Activated naive CD4-positive, alpha-beta T cell treated with anti-CD3 and anti-CD28 coated beads for 36 hours (primary cell): ENCODE measurements at regions of chr2 and their contacts with region 1.

Region 1: GRCh38 chr2:37635504-37636380 is 35.7 kb downstream of the CDC42EP3 start:
- DNase-seq: peak; percentile 85
- H3K4me3 Mint-ChIP-seq: no peak overlapping the region
- H3K27ac Mint-ChIP-seq: peak overlapping the region; percentile 90
- H3K4me1 Mint-ChIP-seq: peaks cover 49% of the 10 kb centered on the region
- H3K27me3 Mint-ChIP-seq: no peaks in the 10 kb centered on the region

Region 2: DNA sequence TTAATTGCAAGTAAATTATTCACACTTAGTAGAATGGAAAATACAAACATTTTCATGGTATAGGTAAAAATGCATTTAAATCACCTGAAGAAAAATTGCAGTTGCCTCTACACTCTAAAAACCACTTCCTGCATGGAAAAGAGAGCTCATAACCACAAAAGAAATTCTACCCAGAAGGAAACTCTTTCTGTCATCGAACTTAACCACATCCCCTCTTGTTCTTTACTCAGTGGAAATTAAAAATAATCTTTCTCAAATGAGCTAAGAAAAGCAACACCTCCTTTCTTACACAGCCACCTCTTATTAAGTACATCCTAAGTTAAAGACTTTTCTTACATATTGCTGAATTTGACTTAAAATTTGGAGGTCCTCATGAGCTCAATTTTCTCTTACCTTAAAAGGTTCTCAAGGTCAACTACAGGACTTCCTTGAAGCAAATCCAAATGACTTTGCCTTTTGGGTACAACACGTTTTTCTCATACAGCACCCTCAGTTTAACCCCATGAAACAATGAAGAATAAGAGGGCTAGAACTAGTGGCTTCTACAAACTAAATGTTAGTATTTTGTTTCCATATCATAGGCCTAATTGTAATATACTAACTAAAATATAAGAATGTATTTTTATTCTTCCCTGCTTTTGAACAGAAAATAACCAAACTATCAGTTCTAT is 1389.3 kb before region 1 on chr2:
- CTCF ChIA-PET with region 1: no interaction called
- intact Hi-C with region 1: loop called (anchors 10 kb)
- DNase-seq: no peak
- H3K4me3 Mint-ChIP-seq: peak overlapping the region; percentile 24
- H3K27ac Mint-ChIP-seq: peak overlapping the region; percentile 72
- H3K4me1 Mint-ChIP-seq: peaks cover 59% of the 10 kb centered on the region
- H3K27me3 Mint-ChIP-seq: no peaks in the 10 kb centered on the region

Region 3: GRCh38 chr2:37324786-37325624 is 310.7 kb before region 1 on chr2 and contains the start of gene PRKD3:
- CTCF ChIA-PET with region 1: no interaction called
- intact Hi-C with region 1: loop called (anchors 5 kb)
- DNase-seq: peak; percentile 51
- H3K4me3 Mint-ChIP-seq: peak within 1 kb of the TSS; percentile 93
- H3K27ac Mint-ChIP-seq: peak within 1 kb of the TSS; percentile 84
- H3K4me1 Mint-ChIP-seq: peaks cover 29% of the 10 kb centered on the region
- H3K27me3 Mint-ChIP-seq: peaks cover 17% of the 10 kb centered on the region
- total RNA-seq, gene PRKD3: 13.0 TPM

Region 4: DNA sequence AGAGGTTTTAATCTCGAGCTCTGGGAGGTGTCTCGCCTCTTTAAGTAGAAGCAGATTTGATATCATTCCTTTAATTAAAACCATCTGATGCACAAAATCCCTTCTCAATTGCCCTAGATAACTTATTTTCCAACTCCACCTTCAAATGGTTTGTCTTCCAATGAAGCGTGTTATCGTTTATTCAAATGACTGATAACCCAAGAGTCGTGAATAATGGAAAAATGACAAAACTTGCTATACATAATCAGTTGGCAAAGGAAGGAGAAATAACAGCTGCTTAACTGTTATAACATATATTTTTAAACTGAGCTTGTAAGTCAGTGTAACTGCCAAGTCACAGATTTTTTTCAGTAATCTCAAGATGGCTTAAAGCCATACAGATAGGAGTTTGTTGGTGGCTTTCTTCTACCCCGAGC is 146.7 kb before region 1 on chr2:
- CTCF ChIA-PET with region 1: no interaction called
- intact Hi-C with region 1: no loop called
- DNase-seq: no peak
- H3K4me3 Mint-ChIP-seq: no peak overlapping the region
- H3K27ac Mint-ChIP-seq: no peak overlapping the region
- H3K4me1 Mint-ChIP-seq: no peaks in the 10 kb centered on the region
- H3K27me3 Mint-ChIP-seq: no peaks in the 10 kb centered on the region

Region 5: DNA sequence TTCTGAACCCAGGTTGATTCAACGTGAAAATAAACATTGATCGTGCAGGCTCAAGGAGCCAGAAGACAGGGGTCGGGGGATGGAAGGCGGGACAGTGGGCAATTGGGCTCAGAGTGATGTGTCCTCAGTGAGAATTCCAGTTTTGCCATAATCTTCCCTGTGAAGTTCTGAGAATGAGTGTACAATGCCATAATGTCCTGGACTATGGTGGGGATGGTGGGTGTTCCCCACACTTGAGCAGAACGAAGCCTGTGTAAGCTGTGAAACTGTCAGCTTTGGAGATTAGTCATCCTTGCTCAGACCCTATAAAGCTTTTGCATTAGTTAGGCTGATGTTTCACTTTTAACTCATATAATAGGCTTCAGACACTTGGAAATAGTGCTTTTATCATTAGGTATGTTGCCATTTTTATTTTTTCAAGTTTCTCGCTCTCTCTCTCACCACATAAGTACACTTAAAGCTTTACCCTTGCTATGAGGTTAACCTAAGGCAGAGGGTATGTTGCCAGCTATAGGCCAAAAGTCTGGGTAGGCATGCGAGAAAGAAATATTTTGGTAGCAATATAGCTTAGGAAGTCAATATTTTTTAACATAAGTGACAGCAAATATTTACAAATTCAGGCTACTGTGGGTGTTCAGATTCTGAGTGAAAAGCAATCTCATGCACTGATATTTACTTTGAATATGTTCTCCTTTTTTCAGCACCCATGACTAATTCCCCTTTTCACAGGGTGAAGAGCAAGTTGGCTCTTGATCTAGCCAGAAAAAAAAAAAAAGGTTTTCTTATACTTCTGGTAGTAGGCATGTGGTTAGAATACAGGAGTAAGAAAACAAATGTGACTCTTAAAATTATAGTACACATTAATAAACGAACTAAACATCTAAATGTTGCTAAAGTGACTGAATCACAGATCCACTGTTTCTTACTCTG is 11.5 kb before region 1 on chr2:
- CTCF ChIA-PET with region 1: no interaction called
- intact Hi-C with region 1: loop called (anchors 1 kb)
- DNase-seq: peak; percentile 43
- H3K4me3 Mint-ChIP-seq: no peak overlapping the region
- H3K27ac Mint-ChIP-seq: peak overlapping the region; percentile 38
- H3K4me1 Mint-ChIP-seq: peaks cover 67% of the 10 kb centered on the region
- H3K27me3 Mint-ChIP-seq: no peaks in the 10 kb centered on the region

Region 6: GRCh38 chr2:37654932-37655331 is 19.2 kb after region 1 on chr2:
- CTCF ChIA-PET with region 1: no interaction called
- intact Hi-C with region 1: loop called (anchors 1 kb)
- DNase-seq: no peak
- H3K4me3 Mint-ChIP-seq: peak overlapping the region; percentile 33
- H3K27ac Mint-ChIP-seq: peak overlapping the region; percentile 71
- H3K4me1 Mint-ChIP-seq: peaks cover 80% of the 10 kb centered on the region
- H3K27me3 Mint-ChIP-seq: no peaks in the 10 kb centered on the region

Region 7: DNA sequence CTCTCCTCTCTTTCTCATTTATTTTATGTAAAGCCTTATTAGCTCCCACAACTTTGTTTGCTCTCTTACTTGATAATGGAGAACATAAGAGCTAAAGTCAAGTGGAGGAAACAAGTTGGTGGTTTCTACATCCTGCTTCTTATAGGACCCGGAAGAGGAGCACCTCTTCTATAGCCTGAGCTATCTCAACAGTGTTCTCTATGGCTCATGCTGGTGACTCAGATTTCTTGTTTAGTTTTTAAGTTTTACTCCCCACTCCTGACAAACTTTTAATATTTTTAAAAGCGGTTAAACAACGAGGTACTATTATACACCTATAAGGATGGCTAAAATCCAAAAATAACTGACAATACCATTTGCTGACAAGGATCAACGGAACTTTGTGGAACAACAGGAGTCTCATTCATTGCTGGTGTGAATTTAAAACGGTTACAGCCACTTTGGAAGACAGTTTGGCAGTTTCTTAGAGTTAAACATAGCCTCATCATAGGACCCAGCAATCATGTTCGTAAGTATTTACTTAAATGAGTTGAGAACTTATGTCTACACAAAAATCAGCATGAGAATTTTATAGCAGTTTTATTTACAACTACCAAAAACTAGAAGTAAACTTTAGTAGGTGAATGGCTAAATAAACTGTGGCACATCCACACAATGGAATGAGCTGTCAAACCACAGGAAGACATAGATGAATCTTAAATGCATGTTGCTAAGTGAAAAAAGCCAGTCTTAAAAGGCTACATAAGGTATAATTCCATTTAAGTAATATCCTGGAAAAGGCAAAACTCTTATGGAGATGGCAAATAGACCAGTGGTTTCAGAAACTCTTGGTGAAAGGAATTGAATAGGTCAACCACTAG is 48.4 kb after region 1 on chr2:
- CTCF ChIA-PET with region 1: no interaction called
- intact Hi-C with region 1: loop called (anchors 1 kb)
- DNase-seq: no peak
- H3K4me3 Mint-ChIP-seq: no peak overlapping the region
- H3K27ac Mint-ChIP-seq: peak overlapping the region; percentile 81
- H3K4me1 Mint-ChIP-seq: peaks cover 26% of the 10 kb centered on the region
- H3K27me3 Mint-ChIP-seq: no peaks in the 10 kb centered on the region

Region 8: GRCh38 chr2:37851828-37852584 is 216.3 kb after region 1 on chr2:
- CTCF ChIA-PET with region 1: no interaction called
- intact Hi-C with region 1: loop called (anchors 2 kb)
- DNase-seq: no peak
- H3K4me3 Mint-ChIP-seq: peak overlapping the region; percentile 17
- H3K27ac Mint-ChIP-seq: peak overlapping the region; percentile 81
- H3K4me1 Mint-ChIP-seq: peaks cover 26% of the 10 kb centered on the region
- H3K27me3 Mint-ChIP-seq: peaks cover 6% of the 10 kb centered on the region